ENCODE measurements at regions of chr10 and their contacts with region 1.

Region 1: GRCh38 chr10:2978111-2978510 is 89.2 kb upstream of the PFKP start:
- DNase-seq: no peak
- H3K4me3 ChIP-seq: no peak overlapping the region
- CTCF ChIP-seq: peak; percentile 47

Region 2: DNA sequence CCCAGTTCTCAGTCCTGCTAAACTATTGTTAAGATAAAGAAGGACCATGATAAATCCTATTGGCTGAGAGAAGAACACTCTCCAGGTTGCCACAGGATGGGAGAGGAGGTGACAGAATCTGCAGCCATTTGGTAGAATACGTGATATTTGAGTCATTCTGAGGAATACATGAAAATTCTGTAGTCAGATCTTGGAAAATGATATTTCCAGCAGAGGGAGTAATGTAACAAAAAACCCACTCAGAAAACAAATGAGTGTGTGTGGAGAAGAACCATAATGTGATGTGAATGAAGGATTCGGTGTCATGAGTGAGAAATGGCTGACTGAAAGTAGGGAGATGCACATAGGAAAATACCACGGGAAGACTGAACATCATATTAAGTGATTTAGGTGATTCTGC is 39.2 kb before region 1 on chr10:
- CTCF ChIA-PET with region 1: interaction called, 33 read pairs
- POLR2A ChIA-PET with region 1: no interaction called
- DNase-seq: no peak
- H3K4me3 ChIP-seq: no peak overlapping the region
- CTCF ChIP-seq: no peak

Region 3: GRCh38 chr10:2992401-2993198 is 14.5 kb after region 1 on chr10:
- CTCF ChIA-PET with region 1: interaction called, 22 read pairs
- POLR2A ChIA-PET with region 1: no interaction called
- DNase-seq: no peak
- H3K4me3 ChIP-seq: no peak overlapping the region
- CTCF ChIP-seq: no peak

Measured in AG04449 (cell line).